PC-9 (cell line): ENCODE measurements at regions of chr19 and their contacts with region 1.

Region 1: DNA sequence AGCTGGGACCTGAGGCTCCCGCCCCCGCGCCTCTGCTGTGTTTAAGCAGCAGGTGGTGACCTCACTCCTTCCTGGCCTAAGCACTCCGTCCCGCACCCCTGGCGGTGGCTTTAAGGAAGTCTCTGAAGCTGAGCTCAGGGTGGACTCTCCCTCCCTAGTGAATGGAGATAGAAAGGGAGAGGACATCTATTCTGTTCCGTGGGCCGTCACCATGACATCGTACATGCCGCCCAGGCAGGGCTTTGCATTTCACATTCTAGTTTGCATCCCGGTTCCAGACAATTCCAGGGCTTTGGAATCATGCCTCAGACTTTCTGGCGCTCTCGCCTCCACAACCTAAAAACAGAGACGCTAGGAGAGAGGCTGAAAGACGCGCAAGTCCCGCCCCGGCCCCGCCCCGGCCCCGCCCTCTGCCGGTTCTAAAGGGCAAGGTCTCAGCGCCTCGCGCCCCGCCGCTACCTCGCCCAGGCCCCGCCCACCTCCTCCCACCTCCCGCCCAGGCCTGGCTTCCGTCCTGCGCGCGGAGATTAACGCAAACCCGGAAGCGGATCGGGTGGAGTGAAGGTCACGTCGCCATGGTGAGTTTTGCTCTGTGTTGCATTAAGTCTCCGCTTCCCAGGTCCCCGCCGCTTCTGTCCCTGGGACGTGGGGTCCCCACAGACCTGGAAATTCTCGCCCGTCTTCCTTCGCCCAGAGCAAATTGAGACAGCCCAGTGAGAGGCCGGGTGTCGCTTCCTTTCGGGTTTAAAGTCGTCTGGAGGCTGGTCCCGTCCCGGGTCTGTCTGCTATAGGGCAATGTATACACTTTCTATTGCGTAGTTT is at the start of gene ZNF808:
- DNase-seq: peak; percentile 90 to 92
- H3K4me3 ChIP-seq: peak within 1 kb of the TSS; percentile 89
- H3K27ac ChIP-seq: peak within 1 kb of the TSS; percentile 57
- H3K4me1 ChIP-seq: peaks cover 6% of the 10 kb centered on the region; the same call in 1 of the 2 replicates
- H3K27me3 ChIP-seq: no peaks in the 10 kb centered on the region
- CTCF ChIP-seq: peak; percentile 72
- total RNA-seq, gene ZNF808: 24.1 and 26.6 TPM in 2 replicates

Region 2: GRCh38 chr19:51354742-51355148 is 1172.6 kb before region 1 on chr19:
- CTCF ChIA-PET with region 1: no interaction called
- POLR2A ChIA-PET with region 1: interaction called, 11 read pairs
- intact Hi-C with region 1: no loop called
- DNase-seq: no peak
- H3K4me3 ChIP-seq: no peak overlapping the region
- H3K27ac ChIP-seq: no peak overlapping the region
- H3K4me1 ChIP-seq: peaks cover 8% of the 10 kb centered on the region
- H3K27me3 ChIP-seq: no peaks in the 10 kb centered on the region
- CTCF ChIP-seq: no peak

Region 3: GRCh38 chr19:52734893-52735661 is 207.7 kb after region 1 on chr19 and contains the start of gene ZNF611:
- CTCF ChIA-PET with region 1: no interaction called
- POLR2A ChIA-PET with region 1: no interaction called
- intact Hi-C with region 1: loop called (anchors 1 kb)
- DNase-seq: peak; percentile 85 to 99
- H3K4me3 ChIP-seq: peak within 1 kb of the TSS; percentile 79
- H3K27ac ChIP-seq: peak within 1 kb of the TSS; percentile 55
- H3K4me1 ChIP-seq: no peaks in the 10 kb centered on the region; the same call in 1 of the 2 replicates
- H3K27me3 ChIP-seq: no peaks in the 10 kb centered on the region
- CTCF ChIP-seq: peak; percentile 74
- total RNA-seq, gene ZNF611: 25.5 and 26.2 TPM in 2 replicates